ENCODE measurements at regions of chr3 and their contacts with region 1.

Region 1: DNA sequence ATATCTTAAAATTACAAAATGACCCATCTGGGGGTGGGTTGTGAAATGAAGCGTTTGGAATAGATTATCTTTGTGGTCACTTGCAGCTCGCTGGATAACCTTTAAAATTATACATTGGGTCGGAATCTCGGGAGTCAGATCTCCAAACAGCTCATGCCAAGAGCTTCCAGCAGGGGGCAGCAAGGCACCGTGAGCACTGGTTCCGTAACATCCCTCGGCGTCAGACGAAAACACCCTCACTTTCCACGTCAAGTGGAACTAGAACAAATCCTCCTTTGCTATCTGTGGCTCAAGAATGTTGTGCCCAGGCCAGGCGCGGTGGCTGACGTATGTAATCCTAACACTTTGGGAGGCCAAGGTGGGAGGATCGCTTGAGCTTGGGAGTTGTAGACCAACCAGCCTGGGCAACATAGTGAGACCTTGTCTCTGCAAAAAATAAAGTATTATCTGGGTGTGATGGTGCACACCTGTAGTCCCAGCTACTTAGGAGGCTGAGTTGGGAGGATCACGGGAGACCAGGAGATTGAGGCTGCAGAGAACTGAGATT is 31.1 kb downstream of the UMPS start:
- DNase-seq: peak; percentile 76
- ATAC-seq: peak; percentile 76
- H3K4me3 ChIP-seq: no peak overlapping the region
- H3K4me3 Mint-ChIP-seq: peak overlapping the region; percentile 61
- H3K27ac ChIP-seq: no peak overlapping the region
- H3K27ac Mint-ChIP-seq: no peak overlapping the region
- H3K4me1 ChIP-seq: peaks cover 0 to 4% of the 10 kb centered on the region in 2 donors
- H3K4me1 Mint-ChIP-seq: peaks cover 4% of the 10 kb centered on the region
- H3K27me3 ChIP-seq: no peaks in the 10 kb centered on the region
- H3K27me3 Mint-ChIP-seq: peaks cover 7% of the 10 kb centered on the region
- CTCF ChIP-seq: peak; percentile 94

Region 2: GRCh38 chr3:124772081-124772831 is 10.9 kb after region 1 on chr3:
- CTCF ChIA-PET with region 1: interaction called, 14 read pairs
- POLR2A ChIA-PET with region 1: no interaction called
- intact Hi-C with region 1: no loop called
- DNase-seq: no peak
- ATAC-seq: no peak
- H3K4me3 ChIP-seq: no peak overlapping the region
- H3K4me3 Mint-ChIP-seq: no peak overlapping the region
- H3K27ac ChIP-seq: no peak overlapping the region
- H3K27ac Mint-ChIP-seq: no peak overlapping the region
- H3K4me1 ChIP-seq: no peaks in the 10 kb centered on the region
- H3K4me1 Mint-ChIP-seq: no peaks in the 10 kb centered on the region
- H3K27me3 ChIP-seq: peaks cover 0 to 9% (median 4%) of the 10 kb centered on the region in 4 experiments
- H3K27me3 Mint-ChIP-seq: peaks cover 34% of the 10 kb centered on the region
- CTCF ChIP-seq: no peak

Region 3: DNA sequence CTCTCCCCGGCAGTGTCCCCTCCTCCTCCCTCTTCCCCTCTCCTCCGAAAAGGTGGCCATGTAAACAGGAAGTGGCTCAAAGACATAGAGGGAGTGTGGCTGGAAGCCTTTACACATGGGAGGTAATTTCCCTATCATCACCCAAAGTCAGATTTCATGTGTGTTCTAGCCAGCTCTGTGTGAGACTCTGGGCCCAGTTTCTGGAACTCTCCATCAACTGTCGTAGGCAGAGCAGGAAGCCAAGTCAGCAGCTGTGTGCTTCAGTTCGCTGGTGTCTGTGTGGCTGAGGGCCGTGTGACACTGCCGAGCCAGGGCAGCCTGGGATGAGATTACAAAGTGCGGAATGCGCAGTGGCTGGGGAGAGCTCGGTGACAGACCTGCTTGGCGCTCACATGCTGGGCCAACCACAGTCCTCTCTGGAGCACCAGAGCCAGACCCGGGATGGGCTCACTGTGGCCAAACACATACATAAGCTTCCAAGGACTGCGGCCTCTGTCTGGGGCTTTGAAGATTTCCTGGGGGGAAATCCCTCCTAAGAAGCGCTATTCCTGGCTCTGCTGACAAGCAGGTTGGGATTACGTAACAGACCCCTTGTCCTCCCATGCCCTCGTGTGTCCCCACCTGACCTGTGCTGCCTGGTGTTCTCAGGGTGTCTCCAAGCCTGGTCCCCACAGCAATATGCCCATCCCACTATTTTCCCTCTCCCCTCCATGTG is 19.6 kb after region 1 on chr3:
- CTCF ChIA-PET with region 1: interaction called, 13 read pairs
- POLR2A ChIA-PET with region 1: no interaction called
- intact Hi-C with region 1: no loop called
- DNase-seq: no peak
- ATAC-seq: no peak
- H3K4me3 ChIP-seq: no peak overlapping the region
- H3K4me3 Mint-ChIP-seq: no peak overlapping the region
- H3K27ac ChIP-seq: no peak overlapping the region
- H3K27ac Mint-ChIP-seq: no peak overlapping the region
- H3K4me1 ChIP-seq: no peaks in the 10 kb centered on the region
- H3K4me1 Mint-ChIP-seq: no peaks in the 10 kb centered on the region
- H3K27me3 ChIP-seq: no peaks in the 10 kb centered on the region
- H3K27me3 Mint-ChIP-seq: peaks cover 29% of the 10 kb centered on the region
- CTCF ChIP-seq: no peak

Region 4: DNA sequence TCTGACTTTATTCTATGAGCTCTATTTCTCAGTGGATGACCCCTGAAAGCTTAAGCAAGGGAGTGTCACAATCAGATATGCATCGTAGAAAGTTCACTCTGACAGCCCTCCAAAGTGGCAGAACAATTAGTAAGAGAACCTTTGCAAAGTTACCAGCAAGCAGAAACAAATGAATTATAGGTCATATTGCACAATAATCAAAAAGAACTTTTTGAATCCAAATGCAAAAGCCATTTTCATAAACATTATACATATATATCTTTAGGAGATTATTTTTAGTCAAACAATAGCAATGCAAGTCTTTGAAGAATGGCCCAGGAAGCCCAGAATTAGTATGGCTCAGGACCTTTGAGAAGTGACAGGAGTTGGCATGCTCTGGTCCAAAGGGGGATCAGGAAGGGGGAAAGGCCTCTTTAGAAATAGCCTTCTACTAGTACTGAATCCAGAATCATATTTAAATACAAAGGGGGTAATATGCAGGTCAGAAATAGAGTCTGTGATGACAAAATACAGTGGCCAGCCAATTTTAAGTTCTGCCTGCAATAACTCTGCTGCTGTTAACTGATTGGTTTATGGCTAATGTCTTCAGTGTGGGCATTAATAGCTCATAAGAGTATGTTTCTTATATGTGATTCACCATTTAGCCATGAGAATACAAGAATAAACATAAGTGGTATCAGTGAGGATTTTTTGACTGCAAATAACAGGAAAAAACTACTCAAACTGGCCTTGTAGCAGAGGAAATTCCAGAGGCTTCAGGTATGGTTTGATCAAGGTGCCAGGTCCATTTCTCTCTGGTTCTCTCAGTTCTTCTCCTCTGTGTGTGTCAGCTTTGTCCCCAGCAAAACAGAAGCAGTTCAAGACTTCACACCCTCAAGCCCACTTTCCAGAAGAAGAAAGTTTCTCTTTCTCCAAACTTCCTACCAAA is 142.8 kb after region 1 on chr3:
- CTCF ChIA-PET with region 1: interaction called, 60 read pairs
- POLR2A ChIA-PET with region 1: no interaction called
- intact Hi-C with region 1: no loop called
- DNase-seq: no peak
- ATAC-seq: no peak
- H3K4me3 ChIP-seq: no peak overlapping the region
- H3K4me3 Mint-ChIP-seq: no peak overlapping the region
- H3K27ac ChIP-seq: no peak overlapping the region
- H3K27ac Mint-ChIP-seq: no peak overlapping the region
- H3K4me1 ChIP-seq: peaks cover 0 to 4% of the 10 kb centered on the region in 2 donors
- H3K4me1 Mint-ChIP-seq: peaks cover 2% of the 10 kb centered on the region
- H3K27me3 ChIP-seq: peaks cover 0 to 7% (median 0%) of the 10 kb centered on the region in 4 experiments
- H3K27me3 Mint-ChIP-seq: peaks cover 20% of the 10 kb centered on the region
- CTCF ChIP-seq: no peak

Region 5: DNA sequence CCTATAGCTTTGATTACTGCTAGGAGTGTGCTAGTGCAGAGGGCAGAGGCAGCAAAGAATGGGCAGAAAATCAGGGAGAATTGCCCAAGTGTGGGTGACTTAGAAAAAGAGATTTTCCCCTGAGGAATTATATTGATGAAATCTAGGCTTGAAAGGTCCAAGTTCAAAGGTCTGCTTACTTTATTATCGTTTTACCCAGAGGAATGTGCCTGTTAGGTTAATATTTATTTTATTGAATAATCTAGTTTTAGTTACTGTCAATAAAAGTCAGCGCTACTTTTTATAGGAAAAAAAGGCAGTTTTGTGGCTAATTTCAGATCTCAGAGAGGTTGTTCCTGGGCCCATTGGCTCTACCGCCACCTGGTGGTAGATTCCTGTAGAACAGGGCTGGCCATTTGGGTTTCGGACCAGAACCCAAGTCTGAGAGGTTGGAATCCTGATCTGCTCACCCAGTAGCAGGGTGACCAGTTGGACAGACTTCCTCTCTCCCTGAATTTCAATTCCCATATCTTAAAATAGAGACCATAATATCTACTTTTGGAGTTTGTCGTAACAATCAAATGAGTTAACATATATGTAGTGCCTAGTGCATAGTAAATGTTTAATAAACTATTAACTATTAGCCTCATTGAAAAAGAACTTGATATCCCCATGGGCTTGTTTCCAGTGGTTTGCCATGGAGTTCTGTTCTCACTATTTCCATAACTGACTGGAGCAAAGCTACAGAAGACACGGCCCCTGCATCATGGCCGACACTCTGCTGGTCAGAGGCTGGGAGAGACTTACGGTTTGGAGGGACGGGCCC is 676.5 kb after region 1 on chr3:
- CTCF ChIA-PET with region 1: interaction called, 63 read pairs
- POLR2A ChIA-PET with region 1: no interaction called
- intact Hi-C with region 1: no loop called
- DNase-seq: peak; percentile 67
- ATAC-seq: peak; percentile 45
- H3K4me3 ChIP-seq: no peak overlapping the region
- H3K4me3 Mint-ChIP-seq: no peak overlapping the region
- H3K27ac ChIP-seq: no peak overlapping the region
- H3K27ac Mint-ChIP-seq: no peak overlapping the region
- H3K4me1 ChIP-seq: no peaks in the 10 kb centered on the region
- H3K4me1 Mint-ChIP-seq: no peaks in the 10 kb centered on the region
- H3K27me3 ChIP-seq: no peaks in the 10 kb centered on the region
- H3K27me3 Mint-ChIP-seq: no peaks in the 10 kb centered on the region
- CTCF ChIP-seq: peak; percentile 99

Region 6: GRCh38 chr3:125585595-125586223 is 824.4 kb after region 1 on chr3:
- CTCF ChIA-PET with region 1: interaction called, 19 read pairs
- POLR2A ChIA-PET with region 1: no interaction called
- intact Hi-C with region 1: no loop called
- DNase-seq: peak; percentile 59
- ATAC-seq: no peak
- H3K4me3 ChIP-seq: no peak overlapping the region
- H3K4me3 Mint-ChIP-seq: no peak overlapping the region
- H3K27ac ChIP-seq: no peak overlapping the region
- H3K27ac Mint-ChIP-seq: no peak overlapping the region
- H3K4me1 ChIP-seq: peaks cover 20 to 23% of the 10 kb centered on the region in 2 donors
- H3K4me1 Mint-ChIP-seq: peaks cover 35% of the 10 kb centered on the region
- H3K27me3 ChIP-seq: no peaks in the 10 kb centered on the region
- H3K27me3 Mint-ChIP-seq: no peaks in the 10 kb centered on the region
- CTCF ChIP-seq: peak; percentile 91